CD4-positive, alpha-beta memory T cell (primary cell): ENCODE measurements at regions of chr6 and their contacts with region 1.

Region 1: DNA sequence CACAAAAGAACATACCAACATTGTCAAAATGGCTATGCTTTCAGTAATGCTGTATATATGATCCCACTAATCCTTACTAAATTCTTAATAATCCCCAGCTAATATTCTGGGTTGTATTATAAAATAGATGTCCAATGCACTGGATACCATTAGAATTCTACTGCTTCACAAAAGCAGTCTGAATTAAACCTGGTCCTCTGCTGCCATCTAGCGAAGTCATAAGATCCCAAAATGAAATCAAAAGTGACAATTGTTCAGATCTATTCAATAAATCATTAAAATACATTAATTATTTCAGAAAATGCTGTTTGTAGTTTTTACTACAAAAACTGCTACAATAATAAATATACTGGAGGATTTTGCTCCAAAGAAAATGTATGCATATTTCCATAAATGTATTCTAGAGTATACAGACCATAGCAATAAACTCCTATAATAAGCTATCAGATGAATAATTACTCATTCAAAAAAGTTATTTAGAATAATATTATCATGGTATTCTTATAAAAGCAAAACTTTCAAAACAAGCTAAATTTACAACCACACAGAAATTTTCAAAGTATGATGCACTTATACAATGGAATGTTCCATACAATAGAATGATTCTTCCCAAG is 92.6 kb downstream of the RNGTT start:
- DNase-seq: peak; percentile 45 to 52 (median 46)
- H3K4me3 ChIP-seq: no peak overlapping the region
- H3K4me3 Mint-ChIP-seq: no peak overlapping the region
- H3K27ac ChIP-seq: no peak overlapping the region
- H3K27ac Mint-ChIP-seq: no peak overlapping the region
- H3K4me1 ChIP-seq: peaks cover 3% of the 10 kb centered on the region
- H3K4me1 Mint-ChIP-seq: peaks cover 6 to 16% (median 9%) of the 10 kb centered on the region in 4 donors
- H3K27me3 ChIP-seq: no peaks in the 10 kb centered on the region
- H3K27me3 Mint-ChIP-seq: no peaks in the 10 kb centered on the region

Region 2: DNA sequence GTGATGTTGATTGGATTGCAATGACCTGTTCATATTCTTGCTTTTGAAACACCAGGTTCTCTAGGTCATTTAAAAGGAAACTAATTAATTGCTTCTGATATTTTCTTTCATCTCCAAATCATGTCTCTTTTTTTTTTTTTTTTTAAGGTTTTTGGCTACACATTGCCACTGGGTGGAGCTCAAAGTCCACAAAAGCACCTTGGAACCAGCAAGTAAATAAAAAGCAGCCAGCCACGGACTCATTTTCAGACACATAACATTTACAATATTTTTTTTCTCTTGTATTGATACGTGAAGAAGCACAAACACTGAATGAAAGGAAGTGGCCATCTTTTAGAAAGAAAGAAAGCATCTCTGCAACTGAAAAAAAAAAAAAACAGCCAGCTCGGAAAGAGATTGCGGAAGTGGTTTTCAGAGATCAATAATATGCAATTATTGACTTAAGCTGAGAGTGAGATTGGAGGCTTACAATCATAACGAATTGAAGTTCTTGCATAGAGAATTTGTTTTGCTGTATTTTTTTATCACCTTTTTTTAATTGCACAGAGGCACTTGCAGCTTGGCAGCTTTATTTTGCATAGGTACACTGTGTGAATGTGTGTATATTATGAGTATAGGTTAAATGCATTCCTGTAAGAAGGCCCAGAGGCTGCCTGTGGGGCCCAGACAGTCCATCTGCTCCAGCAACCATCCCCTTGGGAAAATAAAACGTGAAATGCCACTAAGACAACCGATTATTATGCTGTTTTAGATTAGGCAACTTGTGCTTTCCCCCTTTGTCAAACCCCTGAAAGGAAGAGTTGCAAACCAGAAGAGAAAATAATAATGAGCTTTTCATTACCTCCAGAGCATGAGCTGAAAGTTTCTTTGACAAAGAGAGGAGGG is 1804.1 kb before region 1 on chr6:
- CTCF ChIA-PET with region 1: interaction called, 5 read pairs
- POLR2A ChIA-PET with region 1: no interaction called
- intact Hi-C with region 1: loop called (anchors 2 kb)
- DNase-seq: peak in 4 of 5 donors; percentile 24 to 40 (median 34)
- H3K4me3 ChIP-seq: no peak overlapping the region
- H3K4me3 Mint-ChIP-seq: peak overlapping the region in 4 of 8 donors; percentile 19 to 51 (median 44)
- H3K27ac ChIP-seq: no peak overlapping the region
- H3K27ac Mint-ChIP-seq: peak overlapping the region in 2 of 7 donors; percentile 26 to 43
- H3K4me1 ChIP-seq: no peaks in the 10 kb centered on the region
- H3K4me1 Mint-ChIP-seq: no peaks in the 10 kb centered on the region
- H3K27me3 ChIP-seq: no peaks in the 10 kb centered on the region
- H3K27me3 Mint-ChIP-seq: peaks cover 1 to 12% of the 10 kb centered on the region in 2 donors

Region 3: GRCh38 chr6:87139236-87139635 is 1731.6 kb before region 1 on chr6:
- CTCF ChIA-PET with region 1: interaction called, 5 read pairs
- POLR2A ChIA-PET with region 1: no interaction called
- intact Hi-C with region 1: loop called (anchors 1 kb)
- DNase-seq: peak; percentile 50 to 71 (median 68)
- H3K4me3 ChIP-seq: no peak overlapping the region
- H3K4me3 Mint-ChIP-seq: no peak overlapping the region
- H3K27ac ChIP-seq: no peak overlapping the region
- H3K27ac Mint-ChIP-seq: peak overlapping the region in 1 of 7 donors; percentile 80
- H3K4me1 ChIP-seq: no peaks in the 10 kb centered on the region
- H3K4me1 Mint-ChIP-seq: peaks cover 0 to 4% (median 3%) of the 10 kb centered on the region in 4 donors
- H3K27me3 ChIP-seq: no peaks in the 10 kb centered on the region
- H3K27me3 Mint-ChIP-seq: peaks cover 5 to 6% of the 10 kb centered on the region in 2 donors

Region 4: GRCh38 chr6:87832025-87832825 is 1038.6 kb before region 1 on chr6:
- CTCF ChIA-PET with region 1: interaction called, 13 read pairs
- POLR2A ChIA-PET with region 1: no interaction called
- intact Hi-C with region 1: loop called (anchors 1 kb)
- DNase-seq: peak in 4 of 5 donors; percentile 37 to 51 (median 44)
- H3K4me3 ChIP-seq: peak overlapping the region in 1 of 2 donors; percentile 46
- H3K4me3 Mint-ChIP-seq: peak overlapping the region; percentile 81 to 95 (median 90)
- H3K27ac ChIP-seq: peak overlapping the region; percentile 44
- H3K27ac Mint-ChIP-seq: peak overlapping the region; percentile 19 to 97 (median 95)
- H3K4me1 ChIP-seq: peaks cover 6% of the 10 kb centered on the region
- H3K4me1 Mint-ChIP-seq: peaks cover 0 to 6% (median 5%) of the 10 kb centered on the region in 4 donors
- H3K27me3 ChIP-seq: no peaks in the 10 kb centered on the region
- H3K27me3 Mint-ChIP-seq: no peaks in the 10 kb centered on the region

Region 5: DNA sequence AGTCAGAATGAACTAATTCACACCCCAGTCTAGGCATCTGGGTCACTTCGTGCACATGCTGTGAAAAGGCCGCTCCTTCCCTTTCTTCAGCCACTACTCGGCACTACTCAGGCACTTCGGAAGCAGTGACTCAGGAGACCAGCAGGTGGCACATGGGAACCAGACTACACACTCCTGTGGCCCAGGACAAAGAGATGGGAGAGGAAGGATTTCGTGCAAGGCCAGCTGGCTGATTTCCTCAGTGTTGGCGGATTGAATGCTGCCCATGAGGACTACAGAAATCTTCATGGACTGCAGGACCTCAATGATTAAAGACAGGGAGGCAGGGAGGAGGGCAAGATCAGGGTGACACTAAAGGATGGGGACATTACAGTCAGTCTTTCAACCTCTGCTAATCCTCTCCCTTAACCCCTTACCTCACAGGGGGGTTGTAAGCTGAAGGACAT is 941.0 kb before region 1 on chr6:
- CTCF ChIA-PET with region 1: interaction called, 110 read pairs
- POLR2A ChIA-PET with region 1: no interaction called
- intact Hi-C with region 1: no loop called
- DNase-seq: peak; percentile 41 to 52 (median 44)
- H3K4me3 ChIP-seq: no peak overlapping the region
- H3K4me3 Mint-ChIP-seq: peak overlapping the region in 1 of 8 donors; percentile 14
- H3K27ac ChIP-seq: no peak overlapping the region
- H3K27ac Mint-ChIP-seq: no peak overlapping the region
- H3K4me1 ChIP-seq: no peaks in the 10 kb centered on the region
- H3K4me1 Mint-ChIP-seq: peaks cover 0 to 7% (median 2%) of the 10 kb centered on the region in 4 donors
- H3K27me3 ChIP-seq: no peaks in the 10 kb centered on the region
- H3K27me3 Mint-ChIP-seq: peaks cover 0 to 2% of the 10 kb centered on the region in 2 donors

Region 6: DNA sequence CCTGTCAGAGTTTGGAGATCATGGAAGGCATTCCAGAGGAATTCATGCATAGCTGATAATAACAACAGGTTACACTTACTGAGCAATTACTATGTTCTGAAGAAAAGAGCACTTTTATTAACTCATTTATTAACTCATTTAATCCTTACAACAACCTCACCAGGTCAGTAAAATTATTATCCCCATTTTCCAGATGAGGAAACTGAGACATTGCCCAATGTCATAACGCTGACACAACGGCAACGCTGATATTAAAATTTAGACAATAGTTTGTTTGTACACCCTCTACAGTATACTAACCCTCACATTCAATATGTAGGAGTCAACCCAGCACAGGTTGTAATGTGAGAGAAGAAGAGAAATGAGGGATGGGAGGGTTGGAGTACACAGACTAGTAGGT is 12.4 kb before region 1 on chr6:
- CTCF ChIA-PET with region 1: interaction called, 14 read pairs
- POLR2A ChIA-PET with region 1: interaction called, 3 read pairs
- intact Hi-C with region 1: no loop called
- DNase-seq: no peak
- H3K4me3 ChIP-seq: no peak overlapping the region
- H3K4me3 Mint-ChIP-seq: no peak overlapping the region
- H3K27ac ChIP-seq: no peak overlapping the region
- H3K27ac Mint-ChIP-seq: peak overlapping the region in 1 of 7 donors; percentile 22
- H3K4me1 ChIP-seq: no peaks in the 10 kb centered on the region
- H3K4me1 Mint-ChIP-seq: peaks cover 0 to 4% (median 2%) of the 10 kb centered on the region in 4 donors
- H3K27me3 ChIP-seq: no peaks in the 10 kb centered on the region
- H3K27me3 Mint-ChIP-seq: no peaks in the 10 kb centered on the region

Region 7: DNA sequence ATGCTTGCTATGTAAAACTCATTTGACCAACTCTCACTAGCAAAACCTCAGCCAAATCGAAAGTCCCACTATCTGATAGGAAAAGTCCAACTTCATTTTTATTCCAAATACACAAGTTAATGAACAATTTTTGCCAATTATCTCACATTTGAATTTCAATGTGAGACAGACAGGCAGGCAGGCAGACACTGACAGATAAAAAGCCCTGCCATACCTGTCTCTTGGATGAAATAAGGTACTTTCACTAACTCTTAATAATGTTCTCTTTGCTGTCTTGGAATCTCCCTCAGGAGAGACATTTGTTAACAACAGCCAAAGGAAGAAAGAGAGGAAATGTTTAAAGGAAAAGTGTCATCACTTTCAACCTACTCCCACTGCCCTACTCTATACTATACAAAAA is 10.6 kb after region 1 on chr6:
- CTCF ChIA-PET with region 1: interaction called, 28 read pairs
- POLR2A ChIA-PET with region 1: no interaction called
- intact Hi-C with region 1: no loop called
- DNase-seq: no peak
- H3K4me3 ChIP-seq: no peak overlapping the region
- H3K4me3 Mint-ChIP-seq: no peak overlapping the region
- H3K27ac ChIP-seq: no peak overlapping the region
- H3K27ac Mint-ChIP-seq: no peak overlapping the region
- H3K4me1 ChIP-seq: no peaks in the 10 kb centered on the region
- H3K4me1 Mint-ChIP-seq: peaks cover 0 to 5% (median 4%) of the 10 kb centered on the region in 4 donors
- H3K27me3 ChIP-seq: no peaks in the 10 kb centered on the region
- H3K27me3 Mint-ChIP-seq: no peaks in the 10 kb centered on the region

Region 8: DNA sequence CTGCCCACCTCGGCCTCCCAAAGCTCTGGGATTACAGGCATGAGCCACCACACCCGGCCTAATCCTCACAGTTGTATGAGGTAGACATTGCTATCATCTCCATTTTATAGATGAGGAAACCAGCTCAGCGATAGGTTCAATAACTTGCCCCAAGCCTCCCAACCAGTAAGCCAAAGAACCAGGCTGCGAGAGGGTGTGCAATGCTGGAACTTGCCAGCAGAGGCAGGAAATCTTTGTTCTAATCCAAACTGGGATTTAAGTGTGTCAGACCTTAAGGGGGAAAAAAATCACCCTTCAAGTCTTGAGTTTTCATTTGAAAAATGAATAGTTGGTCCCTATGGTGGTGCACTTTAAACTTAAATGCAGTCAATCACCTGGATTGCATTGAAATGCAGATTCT is 112.7 kb after region 1 on chr6:
- CTCF ChIA-PET with region 1: no interaction called
- POLR2A ChIA-PET with region 1: no interaction called
- intact Hi-C with region 1: no loop called
- DNase-seq: no peak
- H3K4me3 ChIP-seq: no peak overlapping the region
- H3K4me3 Mint-ChIP-seq: no peak overlapping the region
- H3K27ac ChIP-seq: no peak overlapping the region
- H3K27ac Mint-ChIP-seq: no peak overlapping the region
- H3K4me1 ChIP-seq: no peaks in the 10 kb centered on the region
- H3K4me1 Mint-ChIP-seq: no peaks in the 10 kb centered on the region
- H3K27me3 ChIP-seq: no peaks in the 10 kb centered on the region
- H3K27me3 Mint-ChIP-seq: no peaks in the 10 kb centered on the region

Region 9: GRCh38 chr6:90088009-90088408 is 1217.2 kb after region 1 on chr6:
- CTCF ChIA-PET with region 1: no interaction called
- POLR2A ChIA-PET with region 1: no interaction called
- intact Hi-C with region 1: no loop called
- DNase-seq: no peak
- H3K4me3 ChIP-seq: no peak overlapping the region
- H3K4me3 Mint-ChIP-seq: no peak overlapping the region
- H3K27ac ChIP-seq: no peak overlapping the region
- H3K27ac Mint-ChIP-seq: peak overlapping the region in 2 of 7 donors; percentile 26 to 85
- H3K4me1 ChIP-seq: peaks cover 26% of the 10 kb centered on the region
- H3K4me1 Mint-ChIP-seq: peaks cover 15 to 46% (median 27%) of the 10 kb centered on the region in 4 donors
- H3K27me3 ChIP-seq: no peaks in the 10 kb centered on the region
- H3K27me3 Mint-ChIP-seq: no peaks in the 10 kb centered on the region